Right cardiac atrium (tissue), 5 donors: ENCODE measurements at regions of chr9 and their contacts with region 1.

Region 1: GRCh38 chr9:91193658-91194391 is 167.9 kb downstream of the AUH start:
- DNase-seq: peak; percentile 91 to 96 (median 95)
- ATAC-seq: peak; percentile 80 to 83
- H3K4me3 ChIP-seq: peak overlapping the region; percentile 22
- H3K27ac ChIP-seq: peak overlapping the region; percentile 92
- H3K4me1 ChIP-seq: peaks cover 8% of the 10 kb centered on the region
- H3K27me3 ChIP-seq: no peaks in the 10 kb centered on the region

Region 2: DNA sequence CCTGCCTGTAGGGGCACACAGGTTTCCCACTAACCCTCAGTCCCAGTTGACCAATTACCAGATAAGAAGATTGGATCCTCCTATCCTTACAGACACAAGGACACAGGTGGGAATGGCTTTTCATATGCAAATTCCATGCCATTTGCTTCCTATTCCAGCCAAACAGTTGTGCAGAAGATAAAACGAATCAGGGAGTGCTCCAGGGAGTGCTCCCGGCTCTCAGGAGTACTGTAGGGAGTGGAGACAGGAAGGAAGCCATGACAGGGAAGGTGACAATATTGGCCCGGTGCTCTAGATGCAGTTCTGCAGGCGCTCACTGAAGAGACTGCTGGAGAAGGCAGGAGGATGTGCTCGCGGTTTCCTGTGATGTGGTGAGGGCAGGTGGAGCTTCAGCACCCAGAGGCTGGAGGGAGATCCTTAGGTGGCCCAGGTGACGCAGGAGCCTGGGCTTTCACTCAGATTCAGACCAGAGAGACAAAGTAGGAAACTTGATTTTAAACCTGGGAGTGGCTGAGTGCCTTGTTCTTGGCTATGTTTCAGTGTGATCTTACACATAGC is 92.1 kb before region 1 on chr9:
- intact Hi-C with region 1: loop called in 1 of 4 experiments (anchors 10 kb)
- DNase-seq: peak in 1 of 3 donors; percentile 49
- ATAC-seq: peak in 1 of 2 donors; percentile 18
- H3K4me3 ChIP-seq: no peak overlapping the region
- H3K27ac ChIP-seq: peak overlapping the region; percentile 80
- H3K4me1 ChIP-seq: peaks cover 14% of the 10 kb centered on the region
- H3K27me3 ChIP-seq: no peaks in the 10 kb centered on the region

Region 3: GRCh38 chr9:91117959-91118703 is 75.7 kb before region 1 on chr9:
- intact Hi-C with region 1: loop called in 1 of 4 experiments (anchors 2 kb)
- DNase-seq: peak; percentile 86 to 95 (median 94)
- ATAC-seq: peak; percentile 98 to 99
- H3K4me3 ChIP-seq: peak overlapping the region; percentile 30
- H3K27ac ChIP-seq: peak overlapping the region; percentile 74
- H3K4me1 ChIP-seq: no peaks in the 10 kb centered on the region
- H3K27me3 ChIP-seq: no peaks in the 10 kb centered on the region

Region 4: GRCh38 chr9:91245431-91246313 is 51.8 kb after region 1 on chr9:
- intact Hi-C with region 1: loop called in 1 of 4 experiments (anchors 10 kb)
- DNase-seq: no peak
- ATAC-seq: peak in 1 of 2 donors; percentile 89
- H3K4me3 ChIP-seq: no peak overlapping the region
- H3K27ac ChIP-seq: no peak overlapping the region
- H3K4me1 ChIP-seq: peaks cover 17% of the 10 kb centered on the region
- H3K27me3 ChIP-seq: no peaks in the 10 kb centered on the region

Region 5: DNA sequence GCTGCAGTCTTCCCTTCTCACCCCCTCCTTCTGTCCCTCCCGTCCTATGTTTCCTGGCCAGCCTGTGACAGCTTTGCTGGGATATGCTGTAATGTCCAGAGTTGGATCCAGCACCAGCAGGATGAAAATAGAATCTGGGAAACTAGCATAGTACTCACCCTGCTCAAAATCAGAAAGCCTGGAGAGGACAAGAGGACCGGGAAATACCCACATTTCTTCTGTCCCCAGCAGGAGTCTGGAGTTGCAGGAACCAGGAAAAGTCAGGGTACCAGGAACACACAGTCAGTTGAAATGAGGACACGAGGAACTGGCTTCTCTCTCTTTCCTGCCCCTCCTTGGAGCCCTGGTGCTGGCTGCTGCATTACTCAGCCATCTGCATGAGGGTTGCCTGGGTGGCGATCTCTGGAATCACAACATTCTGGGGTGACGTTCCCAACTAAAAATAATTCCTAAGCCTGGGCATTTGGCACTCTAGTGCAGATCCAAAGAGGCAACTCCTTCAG is 289.4 kb after region 1 on chr9:
- intact Hi-C with region 1: no loop called
- DNase-seq: peak; percentile 55 to 68 (median 65)
- ATAC-seq: peak; percentile 91 to 94
- H3K4me3 ChIP-seq: no peak overlapping the region
- H3K27ac ChIP-seq: peak overlapping the region; percentile 93
- H3K4me1 ChIP-seq: peaks cover 7% of the 10 kb centered on the region
- H3K27me3 ChIP-seq: no peaks in the 10 kb centered on the region